Endothelial cell of umbilical vein (primary cell): ENCODE measurements at regions of chr1 and their contacts with region 1.

Region 1: GRCh38 chr1:239898062-239898730 is 193.5 kb upstream of the FMN2 start:
- DNase-seq: peak; percentile 51
- H3K4me3 ChIP-seq: no peak overlapping the region
- H3K27ac ChIP-seq: no peak overlapping the region
- H3K4me1 ChIP-seq: no peaks in the 10 kb centered on the region
- H3K27me3 ChIP-seq: no peaks in the 10 kb centered on the region
- CTCF ChIP-seq: peak; percentile 72 to 82
- POLR2A ChIP-seq: no peak

Region 2: DNA sequence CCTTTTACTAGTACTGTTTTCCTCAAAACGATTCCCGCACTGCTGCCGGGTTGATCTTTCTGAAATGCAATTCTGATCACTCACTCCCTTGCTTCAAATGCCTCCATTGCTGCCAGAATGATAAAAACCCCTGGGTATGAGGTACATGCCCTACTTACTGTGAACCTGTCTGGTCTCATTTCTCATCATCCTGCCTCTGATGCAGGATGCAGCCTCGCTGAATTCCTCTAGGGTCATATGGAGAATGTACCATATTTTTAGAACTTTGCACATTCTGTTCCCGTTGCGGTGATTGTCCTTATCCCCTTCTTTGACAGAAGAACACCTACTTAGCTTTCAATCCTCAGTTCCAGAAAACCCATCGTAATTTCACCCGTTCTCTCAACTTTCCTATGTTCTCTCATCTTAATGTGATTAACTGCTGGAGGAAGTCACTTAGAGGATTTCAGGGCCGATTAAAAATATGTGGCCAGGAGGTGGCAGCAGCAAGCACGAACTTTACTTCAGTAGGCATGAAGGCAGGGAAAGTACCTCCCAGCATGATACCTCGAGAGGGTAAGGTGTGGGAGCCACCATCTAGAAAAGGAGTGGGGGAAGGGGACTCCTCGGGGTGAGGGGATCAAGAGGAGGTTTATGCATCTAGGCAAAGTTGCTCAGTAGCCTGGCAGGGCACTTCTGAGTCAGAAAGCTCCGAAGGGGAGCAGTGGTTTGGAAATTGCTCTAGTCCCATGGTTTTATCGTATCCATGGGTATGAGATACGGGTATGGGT is 1646.0 kb before region 1 on chr1:
- CTCF ChIA-PET with region 1: no interaction called
- POLR2A ChIA-PET with region 1: no interaction called
- dilution Hi-C with region 1: no loop called
- intact Hi-C with region 1: loop called (anchors 2 kb)
- DNase-seq: no peak
- H3K4me3 ChIP-seq: no peak overlapping the region
- H3K27ac ChIP-seq: no peak overlapping the region
- H3K4me1 ChIP-seq: no peaks in the 10 kb centered on the region
- H3K27me3 ChIP-seq: no peaks in the 10 kb centered on the region
- CTCF ChIP-seq: no peak
- POLR2A ChIP-seq: no peak

Region 3: DNA sequence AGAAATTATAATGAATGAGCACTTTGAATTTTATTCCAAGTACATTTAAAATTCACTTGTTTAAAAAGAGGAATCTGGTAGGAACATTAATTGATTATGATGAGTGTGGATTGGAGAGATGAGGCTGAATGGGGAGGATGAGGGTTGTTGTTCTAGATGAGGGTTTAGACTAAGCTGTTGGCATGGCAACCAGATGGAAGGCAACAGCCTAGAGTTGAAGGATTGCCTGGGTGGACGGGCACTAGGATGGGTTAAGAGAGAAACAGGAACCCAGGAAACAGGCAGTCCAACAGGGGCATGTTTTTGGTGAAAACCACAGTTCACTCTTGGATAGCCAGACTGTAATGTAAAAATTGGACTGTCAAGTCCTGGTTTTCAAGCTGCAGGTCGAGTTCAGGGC is 386.3 kb before region 1 on chr1:
- CTCF ChIA-PET with region 1: no interaction called
- POLR2A ChIA-PET with region 1: no interaction called
- dilution Hi-C with region 1: no loop called
- intact Hi-C with region 1: no loop called
- DNase-seq: no peak
- H3K4me3 ChIP-seq: no peak overlapping the region
- H3K27ac ChIP-seq: no peak overlapping the region
- H3K4me1 ChIP-seq: no peaks in the 10 kb centered on the region
- H3K27me3 ChIP-seq: no peaks in the 10 kb centered on the region
- CTCF ChIP-seq: no peak
- POLR2A ChIP-seq: no peak

Region 4: DNA sequence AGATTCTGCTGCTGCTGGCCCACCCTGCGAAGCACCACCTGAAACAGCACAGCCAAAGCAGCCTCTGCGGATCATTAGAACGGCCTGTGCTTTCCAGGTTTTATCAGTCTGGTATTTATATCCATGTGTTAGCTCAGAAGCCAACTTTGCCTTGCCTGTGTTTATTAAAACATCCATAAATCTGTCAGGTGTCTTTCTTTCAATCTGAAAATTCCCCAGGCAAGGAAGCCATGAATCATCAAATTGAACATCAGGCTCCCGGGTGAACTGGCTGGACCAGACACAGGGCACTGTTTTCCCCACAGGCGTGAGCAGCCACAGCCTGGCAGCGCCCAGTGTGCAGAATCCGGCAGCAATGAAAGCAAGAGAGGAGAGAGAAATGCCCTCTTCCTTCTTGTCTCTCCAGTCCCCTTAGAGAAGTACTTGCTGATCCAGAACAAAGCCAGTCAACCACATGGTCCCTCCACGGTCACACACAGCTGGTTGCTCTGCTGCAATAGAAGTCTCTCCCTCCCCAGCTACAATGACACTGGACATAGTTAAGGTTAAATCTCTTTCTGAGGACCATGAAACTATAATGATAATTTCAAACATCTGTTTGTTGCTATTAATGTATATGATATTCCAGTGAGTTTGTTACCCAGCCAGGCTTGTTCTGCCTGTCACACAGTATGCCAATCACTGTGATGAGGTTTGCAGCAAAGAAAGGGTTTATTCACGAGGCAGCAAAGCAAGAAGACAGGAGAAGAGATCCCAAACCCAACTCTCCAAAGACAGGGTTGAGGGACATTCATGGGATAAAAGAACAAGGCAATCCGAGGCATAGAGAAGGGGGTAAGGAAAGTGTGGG is 18.6 kb before region 1 on chr1:
- CTCF ChIA-PET with region 1: no interaction called
- POLR2A ChIA-PET with region 1: no interaction called
- dilution Hi-C with region 1: no loop called
- intact Hi-C with region 1: no loop called
- DNase-seq: no peak
- H3K4me3 ChIP-seq: no peak overlapping the region
- H3K27ac ChIP-seq: no peak overlapping the region
- H3K4me1 ChIP-seq: no peaks in the 10 kb centered on the region
- H3K27me3 ChIP-seq: no peaks in the 10 kb centered on the region
- CTCF ChIP-seq: no peak
- POLR2A ChIP-seq: no peak